Caco-2 (cell line): ENCODE measurements at regions of chr5 and their contacts with region 1.

Region 1: GRCh38 chr5:95113489-95113888 is 171.4 kb downstream of the MCTP1 start:
- DNase-seq: peak; percentile 36 to 39
- H3K4me3 ChIP-seq: no peak overlapping the region
- H3K4me3 Mint-ChIP-seq: no peak overlapping the region
- H3K27ac Mint-ChIP-seq: no peak overlapping the region
- H3K4me1 ChIP-seq: peaks cover 14% of the 10 kb centered on the region
- H3K4me1 Mint-ChIP-seq: no peaks in the 10 kb centered on the region
- H3K27me3 ChIP-seq: no peaks in the 10 kb centered on the region
- H3K27me3 Mint-ChIP-seq: no peaks in the 10 kb centered on the region
- CTCF ChIP-seq: peak in 1 of 2 experiments; percentile 8

Region 2: DNA sequence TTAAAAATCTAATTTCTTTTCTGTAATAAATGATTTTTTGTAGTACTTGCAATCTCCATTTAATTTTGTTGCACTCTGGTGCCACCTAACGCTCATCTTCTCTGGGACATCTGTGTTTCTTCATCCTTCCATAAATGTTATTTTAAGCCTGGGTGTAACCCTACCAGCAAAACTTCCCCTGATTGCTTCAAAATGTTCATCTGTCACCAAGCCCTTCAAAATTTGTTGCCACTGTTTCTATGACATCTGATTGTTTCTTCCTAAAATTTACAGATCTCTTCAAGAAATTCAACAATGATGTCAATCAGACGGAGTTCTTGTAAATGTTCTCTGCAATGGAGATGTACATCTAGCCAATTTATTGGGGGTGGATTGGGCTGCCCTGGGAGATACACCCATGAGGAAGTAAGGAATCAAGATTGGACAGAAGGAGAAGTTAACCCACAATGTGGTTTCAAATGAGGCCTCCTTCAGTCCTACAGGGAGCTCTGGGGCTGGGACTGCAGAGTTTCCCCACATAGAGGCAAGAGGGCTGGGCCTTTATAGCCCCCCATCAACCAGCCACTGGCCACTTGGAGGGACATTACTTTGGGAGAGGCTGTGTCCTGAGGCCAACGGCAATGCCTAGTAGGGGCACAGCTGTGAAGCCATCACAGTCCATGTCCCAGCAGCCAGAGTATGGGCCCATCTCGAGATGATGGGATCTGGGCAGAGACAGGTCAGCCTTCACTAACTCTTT is 148.1 kb after region 1 on chr5:
- CTCF ChIA-PET with region 1: no interaction called
- POLR2A ChIA-PET with region 1: no interaction called
- intact Hi-C with region 1: loop called (anchors 1 kb)
- DNase-seq: peak in 1 of 2 experiments; percentile 34
- H3K4me3 ChIP-seq: no peak overlapping the region
- H3K4me3 Mint-ChIP-seq: no peak overlapping the region
- H3K27ac Mint-ChIP-seq: no peak overlapping the region
- H3K4me1 ChIP-seq: peaks cover 26% of the 10 kb centered on the region
- H3K4me1 Mint-ChIP-seq: peaks cover 13% of the 10 kb centered on the region
- H3K27me3 ChIP-seq: no peaks in the 10 kb centered on the region
- H3K27me3 Mint-ChIP-seq: no peaks in the 10 kb centered on the region
- CTCF ChIP-seq: peak; percentile 41 to 54

Region 3: GRCh38 chr5:95554331-95554646 is 440.8 kb after region 1 on chr5:
- CTCF ChIA-PET with region 1: no interaction called
- POLR2A ChIA-PET with region 1: no interaction called
- intact Hi-C with region 1: no loop called
- DNase-seq: no peak
- H3K4me3 ChIP-seq: peak overlapping the region; percentile 78
- H3K4me3 Mint-ChIP-seq: peak overlapping the region; percentile 83
- H3K27ac Mint-ChIP-seq: peak overlapping the region; percentile 86
- H3K4me1 ChIP-seq: no peaks in the 10 kb centered on the region
- H3K4me1 Mint-ChIP-seq: peaks cover 20% of the 10 kb centered on the region
- H3K27me3 ChIP-seq: no peaks in the 10 kb centered on the region
- H3K27me3 Mint-ChIP-seq: no peaks in the 10 kb centered on the region
- CTCF ChIP-seq: no peak